ENCODE measurements at regions of chr19 and their contacts with region 1.

Region 1: GRCh38 chr19:51158474-51159129 is 16.5 kb downstream of the SIGLEC7 start:
- DNase-seq: peak; percentile 66
- H3K4me3 ChIP-seq: no peak overlapping the region
- H3K27ac ChIP-seq: no peak overlapping the region
- H3K4me1 ChIP-seq: no peaks in the 10 kb centered on the region
- H3K27me3 ChIP-seq: no peaks in the 10 kb centered on the region
- CTCF ChIP-seq: peak; percentile 86

Region 2: GRCh38 chr19:51219307-51219706 is 60.7 kb after region 1 on chr19:
- CTCF ChIA-PET with region 1: no interaction called
- POLR2A ChIA-PET with region 1: no interaction called
- intact Hi-C with region 1: loop called (anchors 2 kb)
- DNase-seq: no peak
- H3K4me3 ChIP-seq: no peak overlapping the region
- H3K27ac ChIP-seq: no peak overlapping the region
- H3K4me1 ChIP-seq: no peaks in the 10 kb centered on the region
- H3K27me3 ChIP-seq: peaks cover 24% of the 10 kb centered on the region
- CTCF ChIP-seq: no peak

Region 3: GRCh38 chr19:51259348-51260245 is 101.0 kb after region 1 on chr19:
- CTCF ChIA-PET with region 1: interaction called, 4 read pairs
- POLR2A ChIA-PET with region 1: no interaction called
- intact Hi-C with region 1: loop called (anchors 2 kb)
- DNase-seq: peak; percentile 58
- H3K4me3 ChIP-seq: no peak overlapping the region
- H3K27ac ChIP-seq: no peak overlapping the region
- H3K4me1 ChIP-seq: no peaks in the 10 kb centered on the region
- H3K27me3 ChIP-seq: peaks cover 2% of the 10 kb centered on the region
- CTCF ChIP-seq: peak; percentile 83